ENCODE measurements at regions of chr7 and their contacts with region 1.

Region 1: GRCh38 chr7:87635921-87636320 is 7.7 kb downstream of the RUNDC3B start:
- DNase-seq: no peak

Region 2: GRCh38 chr7:87570178-87570577 is 65.7 kb before region 1 on chr7:
- intact Hi-C with region 1: loop called (anchors 2 kb)
- DNase-seq: no peak

Region 3: GRCh38 chr7:87735371-87735770 is 99.5 kb after region 1 on chr7:
- intact Hi-C with region 1: no loop called
- DNase-seq: no peak